Activated CD8-positive, alpha-beta memory T cell treated with anti-CD3 and anti-CD28 coated beads, Interleukin-2, amount 10 ng/mL, durations not matched to agents 7 days and 5 days (primary cell): ENCODE measurements at regions of chr10 and their contacts with region 1.

Region 1: GRCh38 chr10:63227207-63227915 is 94.2 kb downstream of the NRBF2 start:
- DNase-seq: no peak
- ATAC-seq: peak; percentile 61
- H3K4me3 Mint-ChIP-seq: peak overlapping the region; percentile 62
- H3K27ac Mint-ChIP-seq: peak overlapping the region; percentile 89
- H3K4me1 Mint-ChIP-seq: peaks cover 51% of the 10 kb centered on the region
- H3K27me3 Mint-ChIP-seq: no peaks in the 10 kb centered on the region

Region 2: GRCh38 chr10:62885684-62886467 is 341.5 kb before region 1 on chr10:
- CTCF ChIA-PET with region 1: no interaction called
- DNase-seq: no peak
- ATAC-seq: no peak
- H3K4me3 Mint-ChIP-seq: no peak overlapping the region
- H3K27ac Mint-ChIP-seq: no peak overlapping the region
- H3K4me1 Mint-ChIP-seq: no peaks in the 10 kb centered on the region
- H3K27me3 Mint-ChIP-seq: peaks cover 33% of the 10 kb centered on the region

Region 3: DNA sequence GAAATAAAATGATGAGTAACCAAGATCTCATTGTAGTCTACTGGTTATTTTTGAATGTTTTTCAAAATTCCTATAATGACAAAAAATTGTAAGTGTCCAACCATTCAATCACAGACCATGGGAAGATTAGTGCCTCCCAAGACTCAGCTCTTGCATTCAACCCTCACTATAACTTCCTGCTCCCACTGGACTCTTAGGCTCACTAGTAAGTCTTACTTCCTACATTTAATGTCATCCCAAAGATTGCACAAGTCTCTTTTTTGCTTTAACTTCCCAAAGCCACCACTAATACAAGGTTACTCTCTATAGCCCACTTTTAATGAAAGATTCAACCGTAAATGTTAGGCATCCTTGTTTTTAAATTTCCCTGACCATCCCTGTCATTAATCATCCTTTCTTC is 206.1 kb before region 1 on chr10:
- CTCF ChIA-PET with region 1: no interaction called
- DNase-seq: no peak
- ATAC-seq: no peak
- H3K4me3 Mint-ChIP-seq: no peak overlapping the region
- H3K27ac Mint-ChIP-seq: no peak overlapping the region
- H3K4me1 Mint-ChIP-seq: no peaks in the 10 kb centered on the region
- H3K27me3 Mint-ChIP-seq: peaks cover 25% of the 10 kb centered on the region

Region 4: DNA sequence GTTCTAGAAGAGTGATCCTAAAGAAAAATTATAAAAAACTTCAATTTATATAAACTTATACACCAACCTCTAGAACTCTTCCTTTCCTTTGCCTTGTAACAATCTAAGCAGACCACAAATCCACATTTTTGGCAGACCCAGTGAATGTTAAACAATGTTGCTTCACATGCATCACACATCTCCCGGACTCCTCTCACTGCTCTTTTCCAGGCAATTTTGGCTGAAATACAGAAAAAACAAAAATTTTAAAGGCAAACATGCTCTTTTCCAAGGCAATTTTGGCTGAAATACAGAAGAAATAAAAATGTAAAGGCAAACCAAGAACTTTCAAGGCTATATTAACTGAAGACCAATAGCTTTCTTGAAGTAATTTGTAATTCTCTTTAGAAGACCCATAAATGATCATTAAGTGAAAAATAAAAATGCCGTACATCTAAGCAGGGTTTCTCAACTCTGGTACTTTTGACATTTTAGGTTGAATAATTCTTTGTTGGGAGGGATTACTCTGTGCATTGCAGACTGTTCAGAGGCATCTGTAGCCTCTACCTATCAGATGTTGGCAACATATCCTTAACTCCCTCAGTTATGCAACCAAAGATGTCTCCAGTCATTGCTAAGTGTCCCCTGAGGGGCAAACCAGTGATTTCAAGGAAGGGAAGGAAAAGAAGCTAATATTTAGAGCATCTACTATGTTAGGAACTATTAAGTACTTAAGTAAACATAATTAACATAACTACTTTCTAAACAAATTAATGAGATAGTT is 29.8 kb before region 1 on chr10:
- CTCF ChIA-PET with region 1: no interaction called
- DNase-seq: no peak
- ATAC-seq: no peak
- H3K4me3 Mint-ChIP-seq: no peak overlapping the region
- H3K27ac Mint-ChIP-seq: no peak overlapping the region
- H3K4me1 Mint-ChIP-seq: peaks cover 3% of the 10 kb centered on the region
- H3K27me3 Mint-ChIP-seq: no peaks in the 10 kb centered on the region

Region 5: DNA sequence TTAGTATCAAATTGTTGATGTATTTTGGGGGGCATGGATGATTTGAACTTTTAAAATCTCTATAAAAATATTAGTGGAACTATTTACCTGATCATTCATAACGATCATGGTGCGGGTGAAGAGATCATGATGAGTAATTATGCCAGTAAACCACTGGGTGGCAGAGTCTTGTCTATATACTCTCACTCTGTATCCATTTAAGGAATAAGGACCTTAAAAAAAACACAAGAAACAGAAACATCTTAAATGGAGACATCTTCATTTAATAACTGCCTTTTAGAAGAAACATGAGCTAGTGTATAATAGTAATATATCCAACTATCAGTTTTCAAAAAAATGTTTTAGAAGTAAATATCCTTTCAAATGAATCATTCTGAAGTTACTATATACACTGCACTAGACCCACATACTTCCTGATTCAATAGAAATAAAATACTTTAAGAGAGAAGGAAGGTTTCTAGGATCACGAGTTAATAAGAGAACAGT is 10.2 kb before region 1 on chr10:
- CTCF ChIA-PET with region 1: interaction called, 13 read pairs
- DNase-seq: no peak
- ATAC-seq: peak; percentile 82
- H3K4me3 Mint-ChIP-seq: no peak overlapping the region
- H3K27ac Mint-ChIP-seq: peak overlapping the region; percentile 42
- H3K4me1 Mint-ChIP-seq: peaks cover 60% of the 10 kb centered on the region
- H3K27me3 Mint-ChIP-seq: no peaks in the 10 kb centered on the region

Region 6: GRCh38 chr10:63268798-63269503 is 41.6 kb after region 1 on chr10:
- CTCF ChIA-PET with region 1: interaction called, 13 read pairs
- DNase-seq: peak; percentile 91
- ATAC-seq: peak; percentile 94
- H3K4me3 Mint-ChIP-seq: peak overlapping the region; percentile 97
- H3K27ac Mint-ChIP-seq: peak overlapping the region; percentile 99
- H3K4me1 Mint-ChIP-seq: peaks cover 17% of the 10 kb centered on the region
- H3K27me3 Mint-ChIP-seq: no peaks in the 10 kb centered on the region